Ovary (tissue), 10 donors: ENCODE measurements at regions of chr7 and their contacts with region 1.

Region 1: GRCh38 chr7:106153891-106154449 is 41.9 kb upstream of the SYPL1 start:
- DNase-seq: peak; percentile 80 to 90 (median 84)
- H3K4me3 ChIP-seq: no peak overlapping the region
- H3K27ac ChIP-seq: no peak overlapping the region
- H3K4me1 ChIP-seq: no peaks in the 10 kb centered on the region
- H3K27me3 ChIP-seq: no peaks in the 10 kb centered on the region
- CTCF ChIP-seq: peak; percentile 83 to 89 (median 86)
- EP300 ChIP-seq: no peak
- POLR2A ChIP-seq: no peak

Region 2: DNA sequence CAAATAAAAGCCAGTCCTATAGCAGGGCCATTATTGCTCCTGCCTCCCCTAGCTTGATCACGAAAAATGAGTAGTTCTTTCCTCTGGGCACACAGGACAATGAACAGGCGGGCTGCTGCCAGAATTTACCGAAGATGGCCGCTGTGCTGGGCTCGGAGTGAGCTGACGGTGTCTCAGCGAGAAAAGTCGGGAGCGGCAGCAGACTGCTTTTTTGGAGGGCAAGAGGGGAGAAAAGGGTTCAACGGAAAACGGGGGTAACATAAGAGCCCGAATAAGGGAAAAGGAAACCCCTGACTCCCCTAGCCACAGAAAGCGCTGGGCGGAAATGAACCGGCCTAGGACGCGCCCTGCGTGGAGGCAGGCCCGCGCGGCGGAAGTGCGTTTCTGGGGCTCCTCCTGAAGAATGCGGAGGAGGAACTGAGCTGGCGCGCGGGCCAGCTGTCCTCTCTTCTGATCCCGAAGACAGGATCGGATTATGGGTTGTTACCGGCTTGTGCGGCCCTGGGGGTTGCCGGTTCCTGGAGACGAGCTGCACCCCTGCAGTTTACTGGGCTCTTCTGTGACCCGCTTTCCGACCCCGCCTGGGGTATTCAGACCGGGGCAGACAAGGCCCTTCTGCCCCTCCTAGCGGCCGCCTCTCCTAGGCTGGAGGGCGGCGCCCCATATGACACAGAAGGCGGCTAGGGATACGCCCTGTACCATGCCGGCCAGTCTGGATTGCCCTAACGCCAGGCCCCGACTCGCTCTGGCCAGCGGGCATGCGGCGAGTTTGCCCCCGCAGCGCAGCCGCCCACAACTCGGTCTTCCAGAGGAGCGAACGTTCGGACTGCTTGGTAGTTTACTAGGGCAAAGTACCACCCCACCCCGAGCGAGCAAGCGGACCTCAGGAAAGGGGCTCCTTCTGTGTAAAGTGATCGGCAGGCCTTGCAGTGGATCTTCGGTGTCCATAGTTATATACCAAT is 1170.1 kb before region 1 on chr7:
- intact Hi-C with region 1: no loop called
- DNase-seq: peak; percentile 85 to 92 (median 87)
- H3K4me3 ChIP-seq: peak overlapping the region; percentile 68
- H3K27ac ChIP-seq: peak overlapping the region; percentile 96 to 97
- H3K4me1 ChIP-seq: peaks cover 10% of the 10 kb centered on the region
- H3K27me3 ChIP-seq: no peaks in the 10 kb centered on the region
- CTCF ChIP-seq: peak in 2 of 3 donors; percentile 68 to 75
- EP300 ChIP-seq: peak; percentile 25
- POLR2A ChIP-seq: peak; percentile 64

Region 3: DNA sequence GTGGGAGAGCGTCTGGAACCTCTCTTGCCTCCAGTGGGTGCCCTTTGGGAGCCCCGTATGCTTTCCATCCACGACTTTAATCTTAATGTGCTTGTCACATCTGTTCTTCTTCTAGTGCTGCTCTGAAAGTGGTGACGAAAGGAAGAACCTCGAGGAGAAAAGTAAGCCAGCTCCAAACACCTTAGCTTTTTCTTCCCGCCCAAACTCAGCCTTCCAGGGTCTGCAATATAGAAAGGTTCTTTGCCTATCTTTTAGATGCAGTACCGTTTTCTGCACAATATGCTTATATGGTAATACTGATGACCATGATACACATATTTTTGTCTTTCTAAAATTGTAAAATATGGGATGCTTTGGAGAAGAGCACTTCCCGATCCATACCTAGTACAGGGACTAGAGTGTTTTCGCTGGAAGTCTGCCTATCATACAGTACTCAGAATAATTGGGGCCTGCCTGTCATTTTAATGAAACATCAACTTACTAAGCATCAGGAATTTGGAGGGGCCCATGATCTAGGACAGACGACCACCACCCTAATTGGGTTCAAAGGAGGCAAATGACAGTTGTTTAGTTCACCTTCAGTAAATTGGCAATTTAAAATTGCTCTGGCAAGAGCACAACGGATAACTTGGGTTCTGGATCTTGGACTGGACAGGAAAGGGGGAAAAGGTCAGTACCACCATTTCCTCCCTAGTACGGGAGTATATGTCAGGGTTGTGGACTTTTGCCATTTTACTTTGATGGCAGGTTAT is 621.1 kb before region 1 on chr7:
- intact Hi-C with region 1: no loop called
- DNase-seq: no peak
- H3K4me3 ChIP-seq: peak overlapping the region; percentile 63
- H3K27ac ChIP-seq: peak overlapping the region in 1 of 2 donors; percentile 54
- H3K4me1 ChIP-seq: peaks cover 2% of the 10 kb centered on the region
- H3K27me3 ChIP-seq: no peaks in the 10 kb centered on the region
- CTCF ChIP-seq: no peak
- EP300 ChIP-seq: no peak
- POLR2A ChIP-seq: no peak

Region 4: GRCh38 chr7:106056513-106057203 is 97.3 kb before region 1 on chr7:
- intact Hi-C with region 1: loop called (anchors 2 to 5 kb)
- DNase-seq: peak; percentile 70 to 79 (median 76)
- H3K4me3 ChIP-seq: no peak overlapping the region
- H3K27ac ChIP-seq: no peak overlapping the region
- H3K4me1 ChIP-seq: no peaks in the 10 kb centered on the region
- H3K27me3 ChIP-seq: no peaks in the 10 kb centered on the region
- CTCF ChIP-seq: peak; percentile 70 to 79 (median 74)
- EP300 ChIP-seq: no peak
- POLR2A ChIP-seq: no peak